GM23248 (cell line): ENCODE measurements at regions of chrX and their contacts with region 1.

Region 1: GRCh38 chrX:101550362-101550750 is at the start of gene ARMCX1:
- DNase-seq: peak; percentile 84
- H3K4me3 ChIP-seq: peak within 1 kb of the TSS; percentile 84
- H3K27ac ChIP-seq: peak within 1 kb of the TSS; percentile 87
- H3K4me1 ChIP-seq: peaks cover 5% of the 10 kb centered on the region; the same call in 1 of the 2 replicates
- H3K27me3 ChIP-seq: no peaks in the 10 kb centered on the region
- total RNA-seq, gene ARMCX1: 29.0 and 30.0 TPM in 2 replicates

Region 2: DNA sequence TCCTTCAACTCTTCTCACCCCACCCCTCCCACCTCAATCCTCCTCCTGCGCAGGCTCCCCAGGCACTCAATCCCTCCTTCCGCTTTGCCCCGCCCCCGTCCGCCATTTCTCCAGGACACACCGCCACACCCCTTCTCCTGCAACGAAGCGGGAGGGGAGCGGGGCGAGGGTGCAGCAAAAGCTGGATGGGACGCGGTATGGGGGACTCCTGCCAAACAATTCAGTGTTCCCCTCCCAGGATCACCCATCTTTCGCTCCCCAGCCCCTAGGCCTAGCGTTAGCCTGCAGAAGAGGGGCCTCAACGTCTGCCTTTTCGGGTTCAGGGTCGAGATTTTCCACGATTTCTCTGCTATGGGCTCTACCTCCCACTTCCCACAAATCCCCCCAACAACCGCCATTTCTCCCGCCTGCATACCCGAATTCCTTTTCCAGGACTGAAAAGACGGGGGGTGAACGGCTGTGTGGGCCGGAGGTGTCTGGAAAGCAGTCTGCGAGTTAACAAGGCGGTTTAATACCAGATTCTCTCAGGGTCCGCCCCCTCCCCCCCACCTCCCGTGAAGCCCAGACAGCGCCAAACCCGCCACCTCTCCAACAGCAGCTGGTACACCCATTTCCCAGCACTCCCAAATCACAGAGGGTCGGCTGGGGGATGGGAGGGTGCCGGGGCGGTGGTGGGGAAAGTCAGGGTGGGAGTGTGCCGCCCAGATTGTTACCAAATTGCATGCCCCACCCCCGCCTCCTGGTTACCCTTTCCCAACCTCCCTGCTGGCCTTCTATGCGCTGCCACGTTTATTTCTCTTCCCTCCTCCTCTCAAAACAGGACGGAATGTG is 108.5 kb after region 1 on chrX:
- in situ Hi-C with region 1: loop called (anchors 25 kb)
- DNase-seq: peak; percentile 76
- H3K4me3 ChIP-seq: peak overlapping the region; percentile 92
- H3K27ac ChIP-seq: peak overlapping the region; percentile 76
- H3K4me1 ChIP-seq: no peaks in the 10 kb centered on the region
- H3K27me3 ChIP-seq: no peaks in the 10 kb centered on the region